ENCODE measurements at regions of chr17 and their contacts with region 1.

Region 1: GRCh38 chr17:8248751-8249607 is at the start of gene PFAS:
- DNase-seq: peak; percentile 98
- ATAC-seq: peak; percentile 53
- H3K4me3 Mint-ChIP-seq: peak within 1 kb of the TSS; percentile 99
- H3K27ac Mint-ChIP-seq: peak within 1 kb of the TSS; percentile 100
- H3K4me1 Mint-ChIP-seq: peaks cover 31% of the 10 kb centered on the region
- H3K27me3 Mint-ChIP-seq: no peaks in the 10 kb centered on the region
- CTCF ChIP-seq: no peak
- total RNA-seq, gene PFAS: 152 to 157 TPM

Region 2: DNA sequence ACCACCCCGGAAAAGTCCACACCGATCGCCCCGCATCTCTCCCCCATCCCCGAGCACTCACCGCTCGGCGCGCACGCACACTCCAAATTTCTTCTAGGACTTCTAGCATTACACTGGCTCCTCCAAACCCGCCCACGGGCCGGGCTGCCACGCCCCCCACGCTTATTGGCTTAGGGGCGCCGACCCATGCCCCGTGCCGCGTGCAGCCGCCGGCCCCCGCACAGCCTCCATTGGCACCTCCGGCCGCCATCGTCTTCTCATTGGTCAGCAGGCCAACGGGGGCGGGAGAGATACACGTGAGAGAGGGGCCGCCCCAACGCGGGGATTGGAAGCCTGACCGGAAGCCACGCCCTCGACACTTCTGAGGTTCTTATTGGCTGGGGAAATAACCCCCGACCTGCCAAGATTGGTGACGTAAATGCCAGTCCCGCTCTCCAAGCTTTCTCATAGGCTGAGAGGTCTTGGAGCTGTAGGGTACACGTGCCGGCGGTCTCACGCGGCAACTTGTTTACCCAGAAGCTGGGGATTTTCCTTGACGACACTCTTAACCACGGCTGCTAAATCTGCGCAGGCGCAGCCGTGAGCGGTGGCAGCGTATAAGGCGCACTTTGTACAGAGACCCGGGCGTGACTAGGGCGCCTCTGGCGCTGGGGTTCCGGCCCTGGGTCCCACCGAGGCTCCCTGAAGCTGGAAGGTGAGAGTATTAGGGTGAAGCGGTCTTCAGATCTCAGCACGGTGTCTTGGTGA is 92.6 kb before region 1 on chr17:
- CTCF ChIA-PET with region 1: interaction called, 4 read pairs
- POLR2A ChIA-PET with region 1: interaction called, 13 read pairs
- intact Hi-C with region 1: no loop called
- DNase-seq: peak; percentile 100
- ATAC-seq: peak; percentile 73
- H3K4me3 Mint-ChIP-seq: no peak overlapping the region
- H3K27ac Mint-ChIP-seq: no peak overlapping the region
- H3K4me1 Mint-ChIP-seq: peaks cover 59% of the 10 kb centered on the region
- H3K27me3 Mint-ChIP-seq: no peaks in the 10 kb centered on the region
- CTCF ChIP-seq: no peak

Region 3: DNA sequence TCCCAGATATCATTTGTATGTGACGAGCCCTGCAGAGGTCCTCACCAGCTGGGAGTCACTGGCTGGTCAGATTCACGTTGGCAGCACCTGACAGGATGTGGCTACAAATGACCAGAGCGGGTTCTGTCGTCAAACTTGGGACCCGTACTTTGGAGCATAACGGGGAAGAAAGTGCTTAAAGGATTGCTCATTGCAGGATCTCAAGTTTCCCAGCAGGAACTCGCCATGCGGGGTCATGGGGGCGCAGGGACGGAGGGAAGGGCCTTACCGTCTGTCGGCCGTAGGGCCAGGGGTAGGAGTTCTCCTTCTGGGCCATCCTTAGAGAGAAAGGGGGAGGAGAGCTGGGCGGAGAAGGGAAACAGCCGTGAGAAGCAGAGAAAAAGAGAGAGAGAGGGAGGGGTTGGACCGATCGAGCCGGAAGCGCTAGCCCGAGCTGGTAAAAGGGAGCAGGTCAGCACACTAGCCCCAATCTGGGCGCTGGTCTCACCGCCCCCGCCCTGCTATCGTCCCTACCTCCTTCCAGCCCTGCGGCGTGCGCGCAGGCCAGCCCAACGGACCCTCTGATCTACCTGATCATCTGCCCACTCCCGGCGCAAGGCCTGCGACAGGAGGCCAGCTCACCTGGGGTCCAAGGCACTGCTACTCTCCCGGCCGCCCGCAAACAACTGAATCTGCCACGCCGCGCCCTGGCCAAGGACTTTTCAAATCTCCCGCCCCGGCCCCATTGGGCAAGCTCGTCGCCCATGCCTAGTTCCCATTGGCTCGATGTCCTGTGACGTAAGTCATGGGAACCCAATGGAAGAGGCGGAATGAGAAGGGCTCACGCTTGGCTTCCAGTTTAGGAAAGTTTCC is 38.8 kb before region 1 on chr17 and contains the start of gene AURKB:
- CTCF ChIA-PET with region 1: no interaction called
- POLR2A ChIA-PET with region 1: interaction called, 22 read pairs
- intact Hi-C with region 1: no loop called
- DNase-seq: peak; percentile 97
- ATAC-seq: peak; percentile 96
- H3K4me3 Mint-ChIP-seq: peak within 1 kb of the TSS; percentile 91
- H3K27ac Mint-ChIP-seq: peak within 1 kb of the TSS; percentile 96
- H3K4me1 Mint-ChIP-seq: peaks cover 12% of the 10 kb centered on the region
- H3K27me3 Mint-ChIP-seq: no peaks in the 10 kb centered on the region
- CTCF ChIP-seq: no peak
- total RNA-seq, gene AURKB: 170 to 174 TPM

Region 4: GRCh38 chr17:8231701-8232100 is 17.3 kb before region 1 on chr17:
- CTCF ChIA-PET with region 1: interaction called, 4 read pairs
- POLR2A ChIA-PET with region 1: interaction called, 232 read pairs
- intact Hi-C with region 1: no loop called
- DNase-seq: no peak
- ATAC-seq: no peak
- H3K4me3 Mint-ChIP-seq: no peak overlapping the region
- H3K27ac Mint-ChIP-seq: no peak overlapping the region
- H3K4me1 Mint-ChIP-seq: peaks cover 9% of the 10 kb centered on the region
- H3K27me3 Mint-ChIP-seq: no peaks in the 10 kb centered on the region
- CTCF ChIP-seq: no peak

Region 5: GRCh38 chr17:8288336-8289102 is 39.5 kb after region 1 on chr17 and contains the start of gene RANGRF:
- CTCF ChIA-PET with region 1: interaction called, 3 read pairs
- POLR2A ChIA-PET with region 1: interaction called, 17 read pairs
- intact Hi-C with region 1: loop called (anchors 5 kb)
- DNase-seq: peak; percentile 91
- ATAC-seq: peak; percentile 91
- H3K4me3 Mint-ChIP-seq: peak within 1 kb of the TSS; percentile 87
- H3K27ac Mint-ChIP-seq: peak within 1 kb of the TSS; percentile 97
- H3K4me1 Mint-ChIP-seq: peaks cover 32% of the 10 kb centered on the region
- H3K27me3 Mint-ChIP-seq: no peaks in the 10 kb centered on the region
- CTCF ChIP-seq: no peak
- total RNA-seq, gene RANGRF: 44.1 to 47.8 TPM

Region 6: DNA sequence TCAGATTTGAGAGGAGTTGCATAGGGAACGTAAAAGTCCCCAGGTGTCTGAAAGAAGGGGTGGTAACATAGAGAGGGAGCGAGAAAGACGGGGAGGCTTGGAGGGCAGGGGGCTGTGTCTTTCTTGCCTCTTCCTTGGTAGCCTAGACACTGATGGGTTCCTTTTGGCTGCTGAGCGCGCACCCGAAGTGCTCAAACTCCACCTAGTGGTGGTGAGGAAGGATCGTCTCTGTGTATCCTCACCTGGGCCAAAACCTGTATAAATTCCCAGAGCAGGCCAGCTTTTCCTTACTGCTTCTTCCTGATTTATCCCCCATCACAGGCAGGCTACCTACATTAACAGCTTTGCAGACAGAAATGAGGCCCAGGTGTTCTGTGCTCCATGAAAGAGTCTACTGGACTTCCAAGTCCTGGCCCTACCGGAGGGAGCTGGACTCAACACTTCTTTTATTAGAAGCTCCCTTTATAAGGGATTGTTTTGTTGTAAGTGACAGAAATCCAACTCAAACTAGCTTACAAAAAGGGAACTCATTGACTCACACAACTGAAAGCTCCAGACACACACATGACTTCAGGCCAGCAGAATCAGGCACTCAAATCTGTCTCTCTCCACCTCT is 51.8 kb after region 1 on chr17:
- CTCF ChIA-PET with region 1: interaction called, 10 read pairs
- POLR2A ChIA-PET with region 1: interaction called, 26 read pairs
- intact Hi-C with region 1: no loop called
- DNase-seq: peak; percentile 70
- ATAC-seq: peak; percentile 95
- H3K4me3 Mint-ChIP-seq: no peak overlapping the region
- H3K27ac Mint-ChIP-seq: peak overlapping the region; percentile 41
- H3K4me1 Mint-ChIP-seq: peaks cover 6% of the 10 kb centered on the region
- H3K27me3 Mint-ChIP-seq: no peaks in the 10 kb centered on the region
- CTCF ChIP-seq: peak; percentile 84

Region 7: DNA sequence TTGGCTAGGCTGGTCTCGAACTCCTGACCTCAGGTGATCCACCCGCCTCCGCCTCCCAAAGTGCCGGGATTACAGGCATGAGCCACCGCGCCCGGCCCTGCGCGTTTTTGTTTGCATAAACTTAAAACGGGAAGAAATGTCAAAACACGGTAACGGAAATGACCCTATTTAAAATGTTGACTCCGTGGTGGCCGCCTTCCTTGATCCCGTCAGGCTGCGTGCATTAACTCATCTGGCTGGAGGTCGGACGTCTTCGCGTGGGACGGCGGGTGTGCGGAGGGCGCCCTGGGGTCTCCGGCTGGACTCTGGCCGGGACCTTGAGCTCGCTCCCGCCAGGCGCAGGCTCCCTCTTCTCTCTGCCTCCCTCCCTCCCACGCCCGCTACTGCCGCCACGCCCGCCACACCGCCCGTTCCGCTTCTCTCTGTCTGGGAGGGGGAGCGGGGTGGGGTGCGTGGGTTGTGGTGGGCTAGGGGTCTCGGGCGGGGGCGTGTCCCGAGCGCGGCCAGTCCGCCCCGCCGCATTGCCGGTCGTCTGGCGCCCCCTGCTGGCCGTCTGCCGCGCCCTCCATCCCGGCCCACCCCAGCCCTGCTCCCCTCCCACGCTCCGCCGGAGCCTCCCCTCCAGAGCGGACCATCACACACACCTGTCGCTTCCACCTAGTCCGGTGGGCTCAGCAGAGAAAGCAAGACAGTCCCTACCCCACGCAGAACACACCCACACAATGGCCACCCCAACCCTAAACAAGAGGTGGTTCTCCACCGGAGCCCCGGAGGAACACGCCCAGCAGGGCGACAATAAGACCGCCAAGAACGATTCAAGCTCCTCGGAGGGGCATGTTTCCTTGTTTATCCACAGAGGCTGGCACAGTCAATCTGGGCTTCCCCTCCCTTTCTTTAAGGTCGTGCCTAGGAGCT is 496.9 kb after region 1 on chr17:
- CTCF ChIA-PET with region 1: no interaction called
- POLR2A ChIA-PET with region 1: no interaction called
- intact Hi-C with region 1: no loop called
- DNase-seq: peak; percentile 83
- ATAC-seq: peak; percentile 74
- H3K4me3 Mint-ChIP-seq: peak overlapping the region; percentile 82
- H3K27ac Mint-ChIP-seq: peak overlapping the region; percentile 88
- H3K4me1 Mint-ChIP-seq: peaks cover 12% of the 10 kb centered on the region
- H3K27me3 Mint-ChIP-seq: no peaks in the 10 kb centered on the region
- CTCF ChIP-seq: peak; percentile 99

Measured in activated CD8-positive, alpha-beta T cell treated with anti-CD3 and anti-CD28 coated beads for 36 hours (primary cell).